ENCODE measurements at regions of chr14 and their contacts with region 1.

Region 1: GRCh38 chr14:96297000-96297399 is 41.0 kb downstream of the BDKRB1 start:
- DNase-seq: no peak
- H3K4me3 ChIP-seq: no peak overlapping the region
- CTCF ChIP-seq: peak; percentile 20

Region 2: DNA sequence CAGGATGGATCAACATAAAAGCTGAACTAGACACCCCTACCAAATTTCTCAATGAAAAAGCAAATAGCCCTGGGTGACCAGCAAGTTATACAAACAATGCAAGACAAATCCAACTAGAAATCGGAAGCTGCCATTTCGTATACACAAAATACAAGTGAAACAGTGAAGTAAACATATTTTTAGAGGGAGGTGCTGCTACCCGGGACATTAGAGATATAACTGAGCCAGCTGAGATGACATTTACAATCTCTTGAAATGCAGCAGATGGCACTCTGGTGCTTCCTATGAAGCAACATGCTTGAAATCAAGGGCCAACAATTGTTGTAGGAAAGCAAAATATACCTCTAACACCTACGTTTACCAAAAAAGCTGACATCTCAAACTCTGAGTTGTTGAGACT is 15.5 kb before region 1 on chr14:
- CTCF ChIA-PET with region 1: interaction called, 41 read pairs
- POLR2A ChIA-PET with region 1: no interaction called
- DNase-seq: no peak
- H3K4me3 ChIP-seq: no peak overlapping the region
- CTCF ChIP-seq: no peak

Region 3: GRCh38 chr14:96309896-96310330 is 12.9 kb after region 1 on chr14:
- CTCF ChIA-PET with region 1: interaction called, 61 read pairs
- POLR2A ChIA-PET with region 1: no interaction called
- DNase-seq: no peak
- H3K4me3 ChIP-seq: no peak overlapping the region
- CTCF ChIP-seq: no peak

Region 4: DNA sequence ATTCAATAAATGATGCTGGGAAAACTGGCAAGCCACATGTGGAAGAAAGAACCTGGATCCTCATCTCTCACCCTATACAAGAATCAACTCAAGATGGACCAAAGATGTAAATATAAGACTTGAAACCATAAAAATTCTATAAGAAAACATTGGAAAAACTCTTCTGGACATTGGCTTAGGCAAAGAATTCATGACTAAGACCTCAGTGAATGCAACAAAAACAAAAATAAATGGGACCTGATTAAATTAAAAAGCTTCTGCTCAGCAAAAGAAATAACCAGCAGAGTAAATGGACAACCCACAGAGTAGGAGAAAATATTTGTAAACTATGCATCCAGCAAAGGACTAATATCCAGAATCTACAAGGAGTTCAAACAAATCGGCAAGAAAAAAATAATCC is 41.6 kb after region 1 on chr14:
- CTCF ChIA-PET with region 1: interaction called, 10 read pairs
- POLR2A ChIA-PET with region 1: no interaction called
- DNase-seq: no peak
- H3K4me3 ChIP-seq: no peak overlapping the region
- CTCF ChIP-seq: no peak

Region 5: GRCh38 chr14:96391293-96392118 is 94.5 kb after region 1 on chr14:
- CTCF ChIA-PET with region 1: no interaction called
- POLR2A ChIA-PET with region 1: no interaction called
- DNase-seq: peak; percentile 26
- H3K4me3 ChIP-seq: peak overlapping the region; percentile 73
- CTCF ChIP-seq: no peak

Region 6: GRCh38 chr14:96424109-96424989 is 127.3 kb after region 1 on chr14:
- CTCF ChIA-PET with region 1: interaction called, 114 read pairs
- POLR2A ChIA-PET with region 1: no interaction called
- DNase-seq: peak; percentile 16
- H3K4me3 ChIP-seq: peak overlapping the region; percentile 52
- CTCF ChIP-seq: peak; percentile 55

Region 7: GRCh38 chr14:96501742-96502617 is 205.0 kb after region 1 on chr14 and contains the start of gene PAPOLA:
- CTCF ChIA-PET with region 1: no interaction called
- POLR2A ChIA-PET with region 1: no interaction called
- DNase-seq: peak; percentile 56
- H3K4me3 ChIP-seq: peak within 1 kb of the TSS; percentile 95
- CTCF ChIP-seq: peak; percentile 22

Measured in AG04449 (cell line).